ENCODE measurements at regions of chr7 and their contacts with region 1.

Region 1: GRCh38 chr7:115782696-115783490 is 247.7 kb downstream of the TFEC start:
- DNase-seq: no peak
- H3K4me3 Mint-ChIP-seq: no peak overlapping the region
- H3K27ac Mint-ChIP-seq: no peak overlapping the region
- H3K4me1 Mint-ChIP-seq: no peaks in the 10 kb centered on the region
- H3K27me3 Mint-ChIP-seq: no peaks in the 10 kb centered on the region

Region 2: GRCh38 chr7:114856625-114857024 is 926.3 kb before region 1 on chr7:
- intact Hi-C with region 1: no loop called
- DNase-seq: no peak
- H3K4me3 Mint-ChIP-seq: no peak overlapping the region
- H3K27ac Mint-ChIP-seq: no peak overlapping the region
- H3K4me1 Mint-ChIP-seq: peaks cover 2% of the 10 kb centered on the region
- H3K27me3 Mint-ChIP-seq: peaks cover 2% of the 10 kb centered on the region

Region 3: DNA sequence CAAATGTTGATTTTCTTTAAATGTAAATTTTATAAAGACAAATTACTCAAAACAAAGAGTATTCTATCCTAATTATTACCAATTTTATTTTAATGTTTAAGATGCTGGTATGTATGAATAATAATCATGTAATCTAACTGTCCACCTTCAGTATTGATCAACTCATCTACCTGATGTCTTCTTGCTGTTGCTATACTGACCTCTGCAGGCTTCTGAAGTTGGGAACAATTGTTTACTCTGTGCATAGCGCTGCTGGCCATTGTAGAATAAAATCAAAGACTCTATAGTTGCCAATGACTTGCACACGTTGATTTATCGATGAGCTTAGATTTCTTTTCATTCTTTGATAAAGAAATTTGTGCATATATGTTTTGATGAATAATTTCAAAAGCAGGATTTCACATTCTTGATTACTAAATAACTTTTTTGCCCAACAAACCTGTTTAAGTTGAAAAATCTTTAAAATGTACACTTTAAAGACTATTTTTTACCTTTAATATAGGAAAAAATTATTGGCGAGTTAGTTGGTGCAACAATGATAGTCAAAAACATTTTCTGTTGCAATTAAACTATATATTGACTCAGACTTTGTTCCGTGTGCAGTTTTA is 34.7 kb before region 1 on chr7:
- intact Hi-C with region 1: loop called (anchors 1 kb)
- DNase-seq: no peak
- H3K4me3 Mint-ChIP-seq: no peak overlapping the region
- H3K27ac Mint-ChIP-seq: no peak overlapping the region
- H3K4me1 Mint-ChIP-seq: no peaks in the 10 kb centered on the region
- H3K27me3 Mint-ChIP-seq: peaks cover 1% of the 10 kb centered on the region

Measured in activated CD4-positive, alpha-beta T cell treated with anti-CD3 and anti-CD28 coated beads, Interleukin-2, amount 10 ng/mL, durations not matched to agents 24 days and 14 days (primary cell).